ENCODE measurements at regions of chr20 and their contacts with region 1.

Region 1: DNA sequence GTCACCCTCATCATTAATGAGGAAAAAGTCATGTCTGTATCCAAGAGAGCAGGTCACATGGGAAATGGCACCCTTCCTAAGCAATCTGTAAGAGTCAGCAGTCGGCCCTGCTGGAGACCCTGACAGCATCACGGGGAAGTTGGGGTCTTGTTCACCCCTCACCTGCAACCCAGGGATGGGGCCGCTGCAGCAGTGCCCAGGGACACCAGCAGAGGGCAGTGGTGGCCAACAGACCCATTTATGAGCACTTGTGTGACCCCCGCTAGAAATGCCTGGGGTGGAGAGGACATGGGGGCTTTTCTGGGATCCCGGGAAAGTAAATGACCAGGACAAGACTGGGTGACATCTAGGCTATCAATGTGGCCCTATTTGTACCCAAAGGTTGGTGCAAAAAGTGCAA is 35.9 kb downstream of the ANKRD60 start:
- DNase-seq: no peak
- ATAC-seq: peak; percentile 61
- H3K4me3 ChIP-seq: no peak overlapping the region
- H3K27ac ChIP-seq: no peak overlapping the region
- H3K4me1 ChIP-seq: no peaks in the 10 kb centered on the region
- H3K27me3 ChIP-seq: 0 out of 4 replicates have a peak, but pooled peaks cover 0 to 1% of the 10 kb centered on the region in 2 experiments
- CTCF ChIP-seq: peak; percentile 62 to 88 (median 77)
- EP300 ChIP-seq: no peak
- POLR2A ChIP-seq: no peak
- RAD21 ChIP-seq: peak; percentile 53

Region 2: GRCh38 chr20:58094160-58094559 is 98.4 kb before region 1 on chr20:
- CTCF ChIA-PET with region 1: no interaction called
- POLR2A ChIA-PET with region 1: no interaction called
- RAD21 ChIA-PET with region 1: no interaction called
- SMC1A ChIA-PET with region 1: no interaction called
- in situ Hi-C with region 1: no loop called
- intact Hi-C with region 1: no loop called
- DNase-seq: no peak
- ATAC-seq: no peak
- H3K4me3 ChIP-seq: no peak overlapping the region
- H3K27ac ChIP-seq: no peak overlapping the region
- H3K4me1 ChIP-seq: no peaks in the 10 kb centered on the region
- H3K27me3 ChIP-seq: peaks cover 2 to 6% of the 10 kb centered on the region in 2 experiments; a peak in 3 of 4 replicates
- CTCF ChIP-seq: no peak
- EP300 ChIP-seq: no peak
- POLR2A ChIP-seq: no peak
- RAD21 ChIP-seq: no peak

Region 3: GRCh38 chr20:58209652-58210397 is 17.3 kb after region 1 on chr20:
- CTCF ChIA-PET with region 1: interaction called, 10 read pairs
- POLR2A ChIA-PET with region 1: no interaction called
- RAD21 ChIA-PET with region 1: interaction called, 4 read pairs
- SMC1A ChIA-PET with region 1: interaction called, 6 read pairs
- in situ Hi-C with region 1: no loop called
- intact Hi-C with region 1: no loop called
- DNase-seq: peak; percentile 17
- ATAC-seq: peak; percentile 98
- H3K4me3 ChIP-seq: no peak overlapping the region
- H3K27ac ChIP-seq: no peak overlapping the region
- H3K4me1 ChIP-seq: no peaks in the 10 kb centered on the region
- H3K27me3 ChIP-seq: no peaks in the 10 kb centered on the region; a peak in 3 of 4 replicates
- CTCF ChIP-seq: peak; percentile 100; a peak in 5 of 6 replicates
- EP300 ChIP-seq: no peak
- POLR2A ChIP-seq: no peak
- RAD21 ChIP-seq: peak; percentile 89